CD4-positive, alpha-beta memory T cell (primary cell): ENCODE measurements at regions of chr3 and their contacts with region 1.

Region 1: DNA sequence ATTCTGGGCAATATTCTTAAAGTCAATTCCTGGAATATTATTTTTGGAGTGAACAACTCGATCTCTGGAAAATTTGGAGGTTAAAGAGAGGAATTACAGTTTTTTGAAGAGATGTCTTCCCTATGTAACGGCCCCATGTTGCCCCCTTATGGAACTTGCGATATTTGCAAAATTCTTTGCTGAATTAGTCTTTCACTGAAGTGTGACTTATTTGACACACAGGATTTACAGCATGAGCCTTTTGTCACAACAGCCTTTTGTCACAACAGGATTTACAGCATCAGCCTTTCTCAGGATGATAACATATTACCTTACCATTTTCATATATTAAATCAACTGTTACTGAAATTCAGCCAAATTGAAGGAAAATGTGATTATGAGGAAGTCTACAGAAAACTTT is 37.8 kb upstream of the SPTSSB start:
- DNase-seq: peak in 4 of 5 donors; percentile 37 to 56 (median 45)
- H3K4me3 ChIP-seq: no peak overlapping the region
- H3K4me3 Mint-ChIP-seq: no peak overlapping the region
- H3K27ac ChIP-seq: no peak overlapping the region
- H3K27ac Mint-ChIP-seq: no peak overlapping the region
- H3K4me1 ChIP-seq: peaks cover 25% of the 10 kb centered on the region
- H3K4me1 Mint-ChIP-seq: peaks cover 20 to 34% (median 27%) of the 10 kb centered on the region in 4 donors
- H3K27me3 ChIP-seq: no peaks in the 10 kb centered on the region
- H3K27me3 Mint-ChIP-seq: peaks cover 3 to 4% of the 10 kb centered on the region in 2 donors

Region 2: GRCh38 chr3:160754855-160755747 is 654.0 kb before region 1 on chr3:
- CTCF ChIA-PET with region 1: no interaction called
- POLR2A ChIA-PET with region 1: interaction called, 3 read pairs
- intact Hi-C with region 1: loop called (anchors 10 kb)
- DNase-seq: peak; percentile 86 to 89 (median 88)
- H3K4me3 ChIP-seq: peak overlapping the region; percentile 67 to 96
- H3K4me3 Mint-ChIP-seq: peak overlapping the region; percentile 91 to 98 (median 94)
- H3K27ac ChIP-seq: peak overlapping the region; percentile 69
- H3K27ac Mint-ChIP-seq: peak overlapping the region; percentile 94 to 98 (median 97)
- H3K4me1 ChIP-seq: peaks cover 24% of the 10 kb centered on the region
- H3K4me1 Mint-ChIP-seq: peaks cover 17 to 37% (median 27%) of the 10 kb centered on the region in 4 donors
- H3K27me3 ChIP-seq: no peaks in the 10 kb centered on the region
- H3K27me3 Mint-ChIP-seq: peaks cover 0 to 5% of the 10 kb centered on the region in 2 donors

Region 3: DNA sequence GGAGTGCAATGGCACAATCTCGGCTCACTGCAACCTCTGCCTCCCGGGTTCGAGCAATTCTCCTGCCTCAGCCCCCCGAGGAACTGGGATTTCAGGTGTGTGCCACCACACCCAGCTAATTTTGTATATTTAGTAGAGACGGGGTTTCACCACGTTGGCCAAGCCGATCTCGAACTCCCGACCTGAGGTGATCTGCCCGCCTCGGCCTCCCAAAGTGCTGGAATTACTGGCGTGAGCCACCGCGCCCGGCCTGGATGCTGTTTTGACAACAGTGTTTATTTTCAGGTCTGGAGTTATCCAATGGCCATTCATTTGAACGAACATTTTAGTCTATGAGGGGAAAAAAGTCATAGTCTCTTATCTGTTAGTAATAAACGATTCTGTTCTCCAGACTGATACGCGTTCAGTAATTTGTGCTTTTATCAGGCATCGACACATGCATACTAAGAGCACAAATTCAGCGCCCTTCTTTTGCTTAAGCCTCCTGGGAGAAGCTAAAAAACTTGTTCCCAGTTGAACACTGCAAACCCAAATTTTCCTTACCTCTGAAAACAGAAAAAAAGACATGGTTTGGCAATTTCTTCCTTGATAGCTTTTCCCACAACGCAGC is 305.2 kb before region 1 on chr3:
- CTCF ChIA-PET with region 1: no interaction called
- POLR2A ChIA-PET with region 1: no interaction called
- intact Hi-C with region 1: no loop called
- DNase-seq: no peak
- H3K4me3 ChIP-seq: no peak overlapping the region
- H3K4me3 Mint-ChIP-seq: peak overlapping the region in 5 of 8 donors; percentile 48 to 71 (median 59)
- H3K27ac ChIP-seq: no peak overlapping the region
- H3K27ac Mint-ChIP-seq: no peak overlapping the region
- H3K4me1 ChIP-seq: peaks cover 4% of the 10 kb centered on the region
- H3K4me1 Mint-ChIP-seq: peaks cover 5 to 13% (median 11%) of the 10 kb centered on the region in 4 donors
- H3K27me3 ChIP-seq: no peaks in the 10 kb centered on the region
- H3K27me3 Mint-ChIP-seq: peaks cover 15 to 30% of the 10 kb centered on the region in 2 donors

Region 4: DNA sequence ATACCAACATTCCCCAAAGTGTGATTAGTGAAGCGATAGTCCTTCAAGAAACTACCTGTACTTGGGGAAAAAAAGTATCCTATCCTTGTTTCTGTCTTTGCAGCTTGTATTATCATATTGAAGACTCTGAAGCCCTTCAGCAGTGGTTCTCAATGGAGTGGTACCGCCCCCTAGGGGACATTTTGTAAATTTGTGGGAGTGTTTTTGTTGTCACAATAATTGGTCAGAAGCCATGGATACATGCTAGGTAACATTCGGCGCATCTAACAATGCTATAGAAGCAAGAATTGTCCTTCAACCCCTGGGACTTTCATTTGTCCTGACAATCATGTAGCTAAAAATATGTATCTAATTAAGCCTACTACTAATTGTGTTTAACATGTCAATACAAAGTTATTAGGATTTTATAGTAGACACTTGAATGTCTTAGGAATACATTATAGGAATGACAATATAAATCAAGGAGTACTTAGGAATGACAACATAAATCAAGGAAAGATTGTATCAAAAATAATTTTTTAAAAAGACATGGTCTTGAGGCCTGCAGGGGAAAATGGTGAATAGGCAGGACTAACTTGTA is 134.3 kb before region 1 on chr3:
- CTCF ChIA-PET with region 1: interaction called, 51 read pairs
- POLR2A ChIA-PET with region 1: interaction called, 3 read pairs
- intact Hi-C with region 1: loop called (anchors 1 kb)
- DNase-seq: peak; percentile 24 to 55 (median 40)
- H3K4me3 ChIP-seq: no peak overlapping the region
- H3K4me3 Mint-ChIP-seq: no peak overlapping the region
- H3K27ac ChIP-seq: no peak overlapping the region
- H3K27ac Mint-ChIP-seq: no peak overlapping the region
- H3K4me1 ChIP-seq: no peaks in the 10 kb centered on the region
- H3K4me1 Mint-ChIP-seq: peaks cover 0 to 3% (median under 1%) of the 10 kb centered on the region in 4 donors
- H3K27me3 ChIP-seq: no peaks in the 10 kb centered on the region
- H3K27me3 Mint-ChIP-seq: no peaks in the 10 kb centered on the region

Region 5: DNA sequence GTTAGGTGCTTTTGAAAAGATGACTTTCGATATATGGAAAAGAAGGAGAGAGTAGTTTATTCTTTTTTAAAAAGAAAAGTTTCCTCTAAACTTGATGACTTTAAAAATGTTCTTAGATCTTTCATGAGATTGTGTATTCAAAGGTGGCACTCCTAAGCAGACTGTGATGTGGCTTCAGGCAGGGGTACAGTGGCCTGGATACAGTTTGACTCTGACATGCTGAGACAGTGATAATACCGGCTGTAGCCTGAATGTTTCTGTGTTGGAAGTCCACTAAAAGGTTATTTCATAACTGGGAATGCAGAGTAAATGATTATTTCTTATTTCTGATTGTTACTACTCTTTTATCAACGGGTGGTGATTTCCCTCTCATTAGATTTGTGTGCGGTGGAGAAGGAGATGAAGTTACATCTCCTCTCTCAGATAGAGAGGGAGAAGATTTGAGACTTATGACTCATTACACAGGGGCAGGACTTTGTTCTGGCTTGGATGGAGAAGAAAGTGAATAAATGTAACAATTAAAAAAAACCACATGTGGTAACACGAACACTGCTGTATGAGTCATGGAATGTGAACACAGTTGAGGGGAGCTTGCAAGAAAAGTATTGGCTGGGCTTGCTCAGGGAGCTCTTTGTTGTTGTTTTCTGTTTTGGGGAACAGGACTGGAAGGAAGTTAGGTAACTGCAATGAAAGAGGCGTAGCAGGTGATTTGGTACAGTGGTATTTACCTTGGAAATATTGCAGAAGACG is 59.4 kb before region 1 on chr3:
- CTCF ChIA-PET with region 1: no interaction called
- POLR2A ChIA-PET with region 1: no interaction called
- intact Hi-C with region 1: loop called (anchors 2 kb)
- DNase-seq: peak; percentile 37 to 84 (median 63)
- H3K4me3 ChIP-seq: no peak overlapping the region
- H3K4me3 Mint-ChIP-seq: peak overlapping the region in 6 of 8 donors; percentile 7 to 79 (median 41)
- H3K27ac ChIP-seq: no peak overlapping the region
- H3K27ac Mint-ChIP-seq: peak overlapping the region; percentile 2 to 74 (median 51)
- H3K4me1 ChIP-seq: peaks cover 24% of the 10 kb centered on the region
- H3K4me1 Mint-ChIP-seq: peaks cover 19 to 34% (median 20%) of the 10 kb centered on the region in 4 donors
- H3K27me3 ChIP-seq: no peaks in the 10 kb centered on the region
- H3K27me3 Mint-ChIP-seq: peaks cover 0 to 2% of the 10 kb centered on the region in 2 donors

Region 6: GRCh38 chr3:161393803-161394202 is 15.3 kb before region 1 on chr3:
- CTCF ChIA-PET with region 1: interaction called, 21 read pairs
- POLR2A ChIA-PET with region 1: no interaction called
- intact Hi-C with region 1: no loop called
- DNase-seq: no peak
- H3K4me3 ChIP-seq: no peak overlapping the region
- H3K4me3 Mint-ChIP-seq: peak overlapping the region in 6 of 8 donors; percentile 35 to 76 (median 56)
- H3K27ac ChIP-seq: no peak overlapping the region
- H3K27ac Mint-ChIP-seq: peak overlapping the region in 5 of 7 donors; percentile 1 to 51 (median 5)
- H3K4me1 ChIP-seq: peaks cover 42% of the 10 kb centered on the region
- H3K4me1 Mint-ChIP-seq: peaks cover 37 to 67% (median 55%) of the 10 kb centered on the region in 4 donors
- H3K27me3 ChIP-seq: no peaks in the 10 kb centered on the region
- H3K27me3 Mint-ChIP-seq: peaks cover 0 to 5% of the 10 kb centered on the region in 2 donors